Stomach (tissue), 19 donors: ENCODE measurements at regions of chr20 and their contacts with region 1.

Region 1: DNA sequence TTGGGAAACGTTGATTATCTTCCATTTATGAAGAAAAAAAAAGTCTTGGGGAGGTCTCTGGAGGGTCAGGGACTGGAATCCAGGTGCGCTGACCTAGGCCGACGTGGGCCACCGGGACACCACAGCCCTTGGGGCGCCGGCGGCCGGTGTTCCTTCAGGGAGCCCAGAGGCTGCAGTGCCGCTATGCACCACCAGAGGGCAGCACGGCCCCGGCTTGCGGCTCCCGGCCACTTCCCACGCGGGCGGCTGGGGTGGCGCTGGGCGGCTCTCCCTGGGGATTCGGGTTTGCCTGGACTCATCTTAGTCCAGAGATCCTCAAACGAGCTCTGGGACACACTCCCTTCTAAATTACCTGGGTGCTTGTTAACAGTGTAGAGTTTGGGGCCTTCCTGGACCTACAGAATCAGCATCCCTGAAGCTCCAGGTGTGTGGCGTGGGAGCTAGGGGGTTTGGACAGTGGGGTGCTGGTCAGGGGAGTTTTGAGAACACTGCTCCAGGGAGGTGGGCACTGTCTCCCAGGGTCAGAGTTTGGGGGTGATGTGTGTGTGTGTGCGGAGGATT is 23.0 kb upstream of the GTSF1L start:
- DNase-seq: peak; percentile 82 to 88
- H3K4me3 ChIP-seq: no peak overlapping the region
- H3K27ac ChIP-seq: no peak overlapping the region
- H3K4me1 ChIP-seq: peaks cover 0 to 55% (median 14%) of the 10 kb centered on the region in 4 donors
- H3K27me3 ChIP-seq: peaks cover 0 to 39% (median 4%) of the 10 kb centered on the region in 3 donors
- CTCF ChIP-seq: peak in 6 of 7 experiments; percentile 72 to 100 (median 97)
- EP300 ChIP-seq: no peak
- POLR2A ChIP-seq: no peak

Region 2: GRCh38 chr20:44074252-44075151 is 324.7 kb after region 1 on chr20:
- intact Hi-C with region 1: loop called (anchors 5 kb)
- DNase-seq: peak; percentile 19 to 37
- H3K4me3 ChIP-seq: no peak overlapping the region
- H3K27ac ChIP-seq: no peak overlapping the region
- H3K4me1 ChIP-seq: peaks cover 0 to 10% (median 4%) of the 10 kb centered on the region in 4 donors
- H3K27me3 ChIP-seq: peaks cover 0 to 5% (median 0%) of the 10 kb centered on the region in 3 donors
- CTCF ChIP-seq: no peak
- EP300 ChIP-seq: no peak
- POLR2A ChIP-seq: no peak

Region 3: DNA sequence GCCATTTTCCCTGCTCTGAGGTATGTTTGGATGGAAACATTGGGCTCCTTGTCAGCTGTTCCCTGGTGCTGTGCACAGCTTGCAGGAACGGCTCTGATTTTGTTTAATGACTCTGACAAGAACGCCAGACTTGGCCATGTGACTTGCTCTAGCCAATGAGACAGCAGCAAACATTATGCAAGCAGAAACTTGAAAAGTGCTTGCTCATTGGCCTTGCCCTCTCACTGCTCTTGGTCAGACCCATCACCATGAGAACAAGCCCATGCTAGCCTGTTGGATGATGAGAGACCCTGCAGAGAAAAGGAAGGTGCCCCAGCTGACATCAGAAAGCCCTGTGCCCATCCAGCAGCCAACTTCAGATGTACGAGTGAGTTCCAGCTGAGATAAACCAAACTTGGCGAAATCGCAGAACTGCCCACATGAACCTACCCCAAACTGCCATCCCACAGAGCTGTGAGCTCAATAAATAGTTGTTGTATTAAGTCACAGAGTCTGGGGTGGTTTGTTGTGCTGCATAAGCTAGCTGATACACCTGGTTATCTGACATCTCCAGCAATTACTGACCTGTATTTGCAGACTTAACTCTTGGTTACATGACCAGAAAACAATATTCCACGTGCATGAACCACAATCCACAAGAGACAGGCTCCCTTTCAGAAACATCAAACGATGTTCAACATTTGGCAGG is 340.3 kb after region 1 on chr20:
- intact Hi-C with region 1: loop called (anchors 5 kb)
- DNase-seq: peak in 1 of 2 donors; percentile 34
- H3K4me3 ChIP-seq: no peak overlapping the region
- H3K27ac ChIP-seq: no peak overlapping the region
- H3K4me1 ChIP-seq: peaks cover 0 to 12% (median 0%) of the 10 kb centered on the region in 4 donors
- H3K27me3 ChIP-seq: peaks cover 0 to 11% (median 0%) of the 10 kb centered on the region in 3 donors
- CTCF ChIP-seq: no peak
- EP300 ChIP-seq: no peak
- POLR2A ChIP-seq: no peak